Dendritic cell treated with granulocyte-macrophage colony-stimulating factor and Interleukin-4, amounts not matched to agents 40 ng/mL and 50 ng/mL, for 4 days (primary cell): ENCODE measurements at regions of chr12 and their contacts with region 1.

Region 1: GRCh38 chr12:50084775-50085614 is at the start of gene SMARCD1:
- H3K4me3 Mint-ChIP-seq: peak within 1 kb of the TSS; percentile 81
- H3K27ac Mint-ChIP-seq: peak within 1 kb of the TSS; percentile 89
- H3K4me1 Mint-ChIP-seq: peaks cover 29% of the 10 kb centered on the region
- H3K27me3 Mint-ChIP-seq: peaks cover 10% of the 10 kb centered on the region

Region 2: DNA sequence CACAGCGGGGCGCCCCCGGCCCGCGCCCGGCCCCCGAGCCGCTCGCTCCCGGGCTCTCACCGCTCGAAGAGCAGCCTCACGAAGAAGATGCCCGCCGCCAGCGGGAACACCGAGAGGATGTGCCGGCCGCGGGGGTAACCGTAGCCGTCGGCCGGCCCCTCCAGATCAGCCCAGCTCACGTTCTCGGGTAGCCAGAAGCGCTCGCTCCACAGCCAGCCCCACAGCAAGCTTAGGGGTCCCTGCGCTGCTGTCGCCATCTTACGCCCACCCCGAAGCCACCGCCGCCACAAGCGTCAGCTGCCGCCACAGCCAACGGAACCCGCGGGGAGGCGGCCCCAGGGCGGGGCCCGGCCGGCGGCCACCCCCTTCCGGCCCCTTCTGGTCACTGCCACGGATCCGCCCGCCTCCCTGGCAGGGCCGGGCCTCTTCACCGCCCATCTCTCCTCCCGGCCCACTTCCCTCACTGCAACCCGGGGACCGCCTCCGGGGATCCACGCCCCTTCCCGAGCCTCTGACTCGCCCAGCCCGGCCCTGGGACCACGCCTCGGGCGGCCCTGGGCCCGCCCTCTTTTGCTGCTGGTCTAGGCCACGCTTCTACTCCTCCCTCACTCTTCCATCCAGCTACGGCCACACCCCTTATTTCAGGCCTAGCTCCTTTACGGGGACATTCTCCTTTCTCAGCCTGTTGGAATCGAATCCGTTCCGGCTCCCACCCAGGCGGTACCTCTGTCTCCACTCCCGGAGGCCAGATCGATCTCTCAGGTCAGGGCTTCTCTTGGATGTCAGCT is 82.2 kb after region 1 on chr12 and contains the start of gene CERS5:
- intact Hi-C with region 1: loop called (anchors 1 kb)
- H3K4me3 Mint-ChIP-seq: peak within 1 kb of the TSS; percentile 82
- H3K27ac Mint-ChIP-seq: peak within 1 kb of the TSS; percentile 92
- H3K4me1 Mint-ChIP-seq: peaks cover 43% of the 10 kb centered on the region
- H3K27me3 Mint-ChIP-seq: no peaks in the 10 kb centered on the region